GM18951 (cell line): ENCODE measurements at regions of chr3 and their contacts with region 1.

Region 1: DNA sequence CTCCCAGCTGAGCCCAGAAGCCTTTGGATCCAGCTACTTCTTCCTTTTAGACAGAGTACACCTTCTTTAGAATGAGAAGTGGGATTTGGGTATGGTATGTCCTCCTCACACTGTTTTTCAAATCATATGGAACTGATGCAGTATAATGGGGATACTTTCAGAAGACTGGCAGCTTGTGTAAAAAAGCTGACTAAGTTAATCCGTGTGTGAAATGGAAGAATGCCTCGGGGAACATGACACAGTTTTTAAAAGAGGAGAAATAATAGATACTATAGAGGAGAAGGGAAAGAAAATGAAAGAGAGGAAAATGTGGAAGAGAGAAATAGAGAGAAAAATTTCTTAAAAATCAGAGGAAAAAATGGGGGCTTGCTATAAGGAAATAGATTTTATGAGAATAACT is 47.7 kb downstream of the TUSC7 start:
- POLR2A ChIP-seq: no peak

Region 2: GRCh38 chr3:116083686-116084085 is 673.6 kb before region 1 on chr3:
- in situ Hi-C with region 1: no loop called
- POLR2A ChIP-seq: no peak

Region 3: GRCh38 chr3:116135457-116136085 is 621.7 kb before region 1 on chr3:
- in situ Hi-C with region 1: loop called (anchors 10 kb)
- POLR2A ChIP-seq: no peak